ENCODE measurements at regions of chr3 and their contacts with region 1.

Region 1: GRCh38 chr3:179322286-179323196 is at the start of gene ZNF639:
- DNase-seq: peak; percentile 75 to 87
- H3K4me3 ChIP-seq: peak within 1 kb of the TSS; percentile 88 to 91
- H3K27ac ChIP-seq: peak within 1 kb of the TSS; percentile 99
- H3K4me1 ChIP-seq: peaks cover 0 to 35% (median 26%) of the 10 kb centered on the region in 4 donors
- H3K27me3 ChIP-seq: no peaks in the 10 kb centered on the region
- CTCF ChIP-seq: peak; percentile 88

Region 2: DNA sequence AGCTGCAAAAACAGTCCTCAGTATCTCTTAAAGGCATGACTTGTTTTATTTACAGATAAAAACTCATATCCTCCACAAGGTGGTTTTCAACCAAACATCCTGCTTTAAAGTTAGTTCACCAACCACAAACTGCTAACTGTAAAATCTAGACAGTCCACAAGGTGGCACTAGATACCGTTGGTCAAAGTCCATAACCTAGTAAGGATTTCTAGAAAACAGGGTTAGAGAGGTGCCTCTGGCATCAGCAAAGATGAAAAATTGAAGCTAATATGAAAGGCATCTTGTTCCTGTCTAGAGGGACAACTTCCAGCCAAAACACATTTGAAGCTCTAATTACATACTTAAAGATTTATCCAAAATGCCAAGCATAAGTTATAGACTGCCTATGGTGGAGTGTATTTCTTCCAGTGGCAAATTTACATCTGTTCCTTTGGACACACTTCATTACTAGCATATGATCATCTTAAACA is 307.0 kb before region 1 on chr3:
- intact Hi-C with region 1: loop called (anchors 5 kb)
- DNase-seq: peak in 1 of 2 donors; percentile 24
- H3K4me3 ChIP-seq: no peak overlapping the region
- H3K27ac ChIP-seq: no peak overlapping the region
- H3K4me1 ChIP-seq: peaks cover 0 to 8% (median 0%) of the 10 kb centered on the region in 4 donors
- H3K27me3 ChIP-seq: no peaks in the 10 kb centered on the region
- CTCF ChIP-seq: peak; percentile 85 to 91

Region 3: DNA sequence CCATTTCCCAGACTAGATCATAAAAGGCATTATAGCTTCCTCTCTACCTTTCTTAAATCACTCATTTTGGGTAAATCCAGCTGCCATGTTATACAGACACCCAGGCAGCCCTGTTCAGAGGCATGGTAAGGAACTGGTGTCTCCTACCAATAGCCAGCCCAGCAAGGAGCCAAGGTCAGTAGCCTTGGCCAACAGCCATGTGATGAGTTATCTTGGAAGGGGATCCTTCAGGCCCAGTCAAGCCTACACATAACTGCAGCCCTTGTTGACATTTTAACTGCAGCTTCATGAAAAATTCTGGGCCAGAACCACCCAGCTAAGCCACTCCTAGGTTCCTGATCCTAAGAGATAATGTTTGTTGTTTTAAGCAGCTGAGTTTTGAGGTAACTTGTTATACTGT is 221.9 kb before region 1 on chr3:
- intact Hi-C with region 1: loop called (anchors 5 kb)
- DNase-seq: no peak
- H3K4me3 ChIP-seq: no peak overlapping the region
- H3K27ac ChIP-seq: no peak overlapping the region
- H3K4me1 ChIP-seq: no peaks in the 10 kb centered on the region
- H3K27me3 ChIP-seq: no peaks in the 10 kb centered on the region
- CTCF ChIP-seq: no peak

Region 4: DNA sequence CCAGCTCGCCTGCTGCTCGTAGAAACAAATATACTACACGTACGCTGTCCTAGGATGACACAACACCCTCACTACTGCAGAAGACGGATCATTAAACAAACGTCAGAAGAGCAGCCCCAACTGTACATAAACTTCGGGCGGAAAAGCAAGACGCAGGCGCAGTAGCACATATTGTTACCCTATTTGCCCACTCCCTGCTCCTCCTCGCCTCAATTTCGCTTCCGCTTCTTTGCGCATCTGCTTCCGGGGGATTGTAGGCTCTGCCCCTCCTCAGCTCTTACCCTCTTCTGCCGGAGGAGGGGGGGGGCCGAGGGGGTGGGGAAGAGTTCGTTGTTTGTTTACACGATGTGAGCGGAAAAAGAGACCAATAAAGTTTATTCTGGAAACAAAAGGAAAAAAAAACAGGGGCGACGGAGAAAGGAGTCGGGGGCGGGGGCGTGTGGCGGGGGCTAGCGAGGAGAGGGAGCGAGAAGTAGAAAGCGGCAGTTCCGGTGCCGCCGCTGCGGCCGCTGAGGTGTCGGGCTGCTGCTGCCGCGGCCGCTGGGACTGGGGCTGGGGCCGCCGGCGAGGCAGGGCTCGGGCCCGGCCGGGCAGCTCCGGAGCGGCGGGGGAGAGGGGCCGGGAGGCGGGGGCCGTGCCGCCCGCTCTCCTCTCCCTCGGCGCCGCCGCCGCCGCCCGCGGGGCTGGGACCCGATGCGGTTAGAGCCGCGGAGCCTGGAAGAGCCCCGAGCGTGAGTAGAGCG is 174.5 kb before region 1 on chr3 and contains the start of gene PIK3CA:
- intact Hi-C with region 1: loop called (anchors 2 kb)
- DNase-seq: peak; percentile 97
- H3K4me3 ChIP-seq: peak within 1 kb of the TSS; percentile 83 to 94
- H3K27ac ChIP-seq: peak within 1 kb of the TSS; percentile 93 to 98
- H3K4me1 ChIP-seq: peaks cover 0 to 36% (median 10%) of the 10 kb centered on the region in 4 donors
- H3K27me3 ChIP-seq: no peaks in the 10 kb centered on the region
- CTCF ChIP-seq: no peak

Measured in tibial artery (tissue), 4 donors.